Sigmoid colon (tissue), 7 donors: ENCODE measurements at regions of chr5 and their contacts with region 1.

Region 1: GRCh38 chr5:34007621-34008600 is at the start of gene AMACR:
- DNase-seq: peak; percentile 97
- H3K4me3 ChIP-seq: peak within 1 kb of the TSS; percentile 60 to 73 (median 69)
- H3K27ac ChIP-seq: peak within 1 kb of the TSS; percentile 90 to 94 (median 92)
- H3K4me1 ChIP-seq: peaks cover 0 to 20% (median 12%) of the 10 kb centered on the region in 4 donors
- H3K27me3 ChIP-seq: no peaks in the 10 kb centered on the region
- CTCF ChIP-seq: no peak
- EP300 ChIP-seq: no peak
- POLR2A ChIP-seq: peak; percentile 78
- total RNA-seq, gene AMACR: 5.3 to 11.4 (median 9.3) TPM

Region 2: GRCh38 chr5:33565324-33565723 is 442.6 kb before region 1 on chr5:
- intact Hi-C with region 1: no loop called
- DNase-seq: peak; percentile 80
- H3K4me3 ChIP-seq: no peak overlapping the region
- H3K27ac ChIP-seq: peak overlapping the region in 2 of 4 donors; percentile 18 to 46
- H3K4me1 ChIP-seq: peaks cover 0 to 15% (median 8%) of the 10 kb centered on the region in 4 donors
- H3K27me3 ChIP-seq: no peaks in the 10 kb centered on the region
- CTCF ChIP-seq: no peak
- EP300 ChIP-seq: no peak
- POLR2A ChIP-seq: no peak

Region 3: DNA sequence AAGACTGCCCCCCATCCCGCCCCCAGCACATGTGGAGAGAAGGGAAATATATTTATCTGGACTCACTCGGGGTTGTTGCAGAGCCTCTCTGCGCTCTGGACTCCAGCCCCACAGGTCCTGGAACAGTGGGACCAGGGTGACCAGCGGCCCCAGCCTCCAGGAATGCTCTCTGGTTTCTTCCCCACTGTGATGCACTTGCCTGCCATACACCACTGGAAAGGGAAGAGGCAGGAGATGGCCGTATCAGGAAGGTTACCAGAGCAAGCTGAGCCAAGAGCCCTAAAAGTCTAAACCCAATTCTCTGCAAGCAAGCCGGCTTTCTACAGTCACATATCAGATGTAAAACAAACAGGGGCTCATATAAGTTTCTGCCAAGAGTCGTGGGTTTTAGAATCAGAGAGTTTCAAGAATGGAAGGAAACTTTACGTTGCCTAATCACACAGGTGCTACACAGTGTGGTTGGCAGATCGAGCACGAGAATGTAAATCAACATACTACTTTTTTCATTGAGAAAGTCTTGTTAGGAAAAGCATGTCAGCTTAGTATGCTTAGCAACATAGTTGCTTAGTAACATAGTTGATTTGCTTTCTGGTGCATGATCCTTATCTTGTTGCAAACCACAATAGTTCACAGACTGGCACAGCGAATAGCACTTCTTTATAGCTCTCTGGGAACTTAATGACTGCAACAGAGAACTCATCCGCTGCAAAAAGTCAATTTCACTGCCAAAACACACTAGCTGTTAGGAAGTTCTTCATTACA is 366.0 kb before region 1 on chr5:
- intact Hi-C with region 1: no loop called
- DNase-seq: no peak
- H3K4me3 ChIP-seq: no peak overlapping the region
- H3K27ac ChIP-seq: no peak overlapping the region
- H3K4me1 ChIP-seq: no peaks in the 10 kb centered on the region
- H3K27me3 ChIP-seq: no peaks in the 10 kb centered on the region
- CTCF ChIP-seq: no peak
- EP300 ChIP-seq: no peak
- POLR2A ChIP-seq: no peak

Region 4: GRCh38 chr5:34043099-34043876 is 35.4 kb after region 1 on chr5 and contains the start of gene C1QTNF3:
- intact Hi-C with region 1: loop called (anchors 5 kb)
- DNase-seq: peak; percentile 75
- H3K4me3 ChIP-seq: peak within 1 kb of the TSS; percentile 11 to 33 (median 24)
- H3K27ac ChIP-seq: peak within 1 kb of the TSS; percentile 19 to 63 (median 45)
- H3K4me1 ChIP-seq: peaks cover 0 to 46% (median 42%) of the 10 kb centered on the region in 4 donors
- H3K27me3 ChIP-seq: no peaks in the 10 kb centered on the region
- CTCF ChIP-seq: no peak
- EP300 ChIP-seq: no peak
- POLR2A ChIP-seq: no peak
- total RNA-seq, gene C1QTNF3: 13.3 to 32.8 (median 17.0) TPM

Region 5: DNA sequence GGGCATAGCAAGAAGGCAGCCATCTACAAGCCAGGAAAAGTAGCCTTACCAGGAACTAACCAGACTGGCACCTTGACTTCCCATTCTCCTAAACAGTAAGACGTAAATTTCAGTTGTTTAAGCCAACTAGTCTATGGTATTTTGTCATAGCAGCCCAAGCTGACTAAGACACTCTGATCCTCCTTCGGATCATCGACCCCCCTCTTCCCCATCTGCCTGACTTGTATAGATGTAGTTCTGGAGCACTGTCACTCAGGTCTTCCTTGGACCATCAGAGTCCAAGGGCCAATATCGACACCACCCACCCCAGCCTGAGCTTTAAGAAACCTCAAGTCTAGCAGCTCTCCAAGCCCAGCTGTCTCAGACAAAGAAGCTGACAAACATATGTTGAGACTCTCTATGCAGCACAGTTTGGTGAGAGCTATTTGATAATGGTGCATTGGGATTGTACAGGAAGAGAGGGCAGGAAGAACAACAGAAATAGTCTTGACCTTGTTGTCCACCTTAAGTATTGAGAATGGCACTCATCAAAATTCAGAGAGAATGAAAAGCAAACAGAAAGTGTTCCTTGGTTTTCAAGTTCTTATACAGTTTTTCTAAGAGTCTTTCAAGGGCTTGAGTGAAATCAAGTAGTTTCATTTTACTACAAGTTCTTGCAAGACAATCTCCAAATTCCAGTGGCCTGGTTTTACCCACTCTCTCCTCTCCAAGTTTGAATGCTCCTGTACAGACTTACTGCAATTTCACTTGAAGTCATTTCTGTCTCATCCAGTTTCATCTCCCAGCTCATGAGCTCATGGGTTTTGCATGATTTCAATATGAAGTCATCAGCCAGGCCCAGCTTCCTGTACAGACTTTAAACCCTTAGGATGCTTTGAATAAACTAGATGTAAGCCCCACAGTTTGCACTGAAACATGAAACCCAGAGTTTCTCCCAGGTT is 525.9 kb after region 1 on chr5:
- intact Hi-C with region 1: loop called (anchors 5 kb)
- DNase-seq: no peak
- H3K4me3 ChIP-seq: no peak overlapping the region
- H3K27ac ChIP-seq: peak overlapping the region; percentile 38 to 87 (median 63)
- H3K4me1 ChIP-seq: peaks cover 0 to 58% (median 48%) of the 10 kb centered on the region in 4 donors
- H3K27me3 ChIP-seq: no peaks in the 10 kb centered on the region
- CTCF ChIP-seq: no peak
- EP300 ChIP-seq: no peak
- POLR2A ChIP-seq: no peak

Region 6: DNA sequence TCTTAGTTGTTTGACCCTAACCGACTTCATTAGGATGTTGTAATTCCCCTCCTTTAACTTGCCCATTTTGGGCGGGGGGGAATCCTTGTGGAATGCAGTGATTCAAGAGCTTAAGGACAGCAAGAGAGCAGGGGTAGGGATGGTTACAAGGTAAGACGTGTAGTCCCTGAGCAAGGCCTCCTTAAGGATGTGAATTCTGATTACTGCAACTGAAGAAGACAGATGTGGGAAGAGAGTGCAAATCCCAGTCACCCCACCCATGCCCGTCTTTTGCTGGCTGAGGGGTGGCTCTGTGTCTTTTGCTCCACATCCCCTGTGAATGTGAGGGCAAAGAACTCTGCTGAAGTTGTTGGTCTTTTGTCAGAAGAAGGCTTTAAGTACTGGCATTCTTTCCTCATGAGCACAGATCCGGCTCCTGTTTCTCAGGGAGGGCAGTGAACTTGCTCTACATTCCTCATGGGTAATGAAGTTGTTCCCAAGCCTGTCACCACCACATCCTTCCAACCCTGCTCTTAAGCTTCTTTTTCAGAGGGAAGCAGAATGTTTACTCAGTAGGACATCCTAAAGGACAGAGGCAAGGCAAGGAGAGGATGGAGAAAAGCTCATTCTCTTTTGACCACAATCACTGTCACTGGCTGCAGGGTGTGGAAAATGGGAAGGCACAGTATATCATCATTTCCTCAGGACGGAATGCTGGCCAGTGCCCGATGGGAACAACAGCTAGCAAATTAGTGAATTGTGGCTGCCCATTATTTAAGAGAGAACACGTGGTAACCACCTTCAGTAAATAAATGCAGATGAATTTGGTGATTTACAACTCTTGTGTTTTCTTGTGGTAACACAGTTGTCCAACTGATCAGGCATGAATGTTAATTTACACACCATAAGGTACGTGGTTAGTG is 709.8 kb after region 1 on chr5:
- intact Hi-C with region 1: no loop called
- DNase-seq: no peak
- H3K4me3 ChIP-seq: no peak overlapping the region
- H3K27ac ChIP-seq: peak overlapping the region; percentile 29 to 73 (median 61)
- H3K4me1 ChIP-seq: peaks cover 0 to 27% (median 24%) of the 10 kb centered on the region in 4 donors
- H3K27me3 ChIP-seq: no peaks in the 10 kb centered on the region
- CTCF ChIP-seq: no peak
- EP300 ChIP-seq: no peak
- POLR2A ChIP-seq: no peak

Region 7: GRCh38 chr5:34915139-34915855 is 907.4 kb after region 1 on chr5 and contains the starts of genes BRIX1 and RAD1:
- intact Hi-C with region 1: loop called (anchors 10 kb)
- DNase-seq: peak; percentile 97
- H3K4me3 ChIP-seq: peak within 1 kb of the TSS; percentile 72 to 99 (median 85)
- H3K27ac ChIP-seq: peak within 1 kb of the TSS; percentile 87 to 93 (median 90)
- H3K4me1 ChIP-seq: peaks cover 0 to 43% (median 36%) of the 10 kb centered on the region in 4 donors
- H3K27me3 ChIP-seq: no peaks in the 10 kb centered on the region
- CTCF ChIP-seq: no peak
- EP300 ChIP-seq: no peak
- POLR2A ChIP-seq: peak; percentile 76 to 79
- total RNA-seq, gene BRIX1: 8.6 to 26.0 (median 20.3) TPM
- total RNA-seq, gene RAD1: 15.8 to 25.8 (median 20.0) TPM